Activated CD8-positive, alpha-beta T cell treated with anti-CD3 and anti-CD28 coated beads for 36 hours (primary cell): ENCODE measurements at regions of chr11 and their contacts with region 1.

Region 1: DNA sequence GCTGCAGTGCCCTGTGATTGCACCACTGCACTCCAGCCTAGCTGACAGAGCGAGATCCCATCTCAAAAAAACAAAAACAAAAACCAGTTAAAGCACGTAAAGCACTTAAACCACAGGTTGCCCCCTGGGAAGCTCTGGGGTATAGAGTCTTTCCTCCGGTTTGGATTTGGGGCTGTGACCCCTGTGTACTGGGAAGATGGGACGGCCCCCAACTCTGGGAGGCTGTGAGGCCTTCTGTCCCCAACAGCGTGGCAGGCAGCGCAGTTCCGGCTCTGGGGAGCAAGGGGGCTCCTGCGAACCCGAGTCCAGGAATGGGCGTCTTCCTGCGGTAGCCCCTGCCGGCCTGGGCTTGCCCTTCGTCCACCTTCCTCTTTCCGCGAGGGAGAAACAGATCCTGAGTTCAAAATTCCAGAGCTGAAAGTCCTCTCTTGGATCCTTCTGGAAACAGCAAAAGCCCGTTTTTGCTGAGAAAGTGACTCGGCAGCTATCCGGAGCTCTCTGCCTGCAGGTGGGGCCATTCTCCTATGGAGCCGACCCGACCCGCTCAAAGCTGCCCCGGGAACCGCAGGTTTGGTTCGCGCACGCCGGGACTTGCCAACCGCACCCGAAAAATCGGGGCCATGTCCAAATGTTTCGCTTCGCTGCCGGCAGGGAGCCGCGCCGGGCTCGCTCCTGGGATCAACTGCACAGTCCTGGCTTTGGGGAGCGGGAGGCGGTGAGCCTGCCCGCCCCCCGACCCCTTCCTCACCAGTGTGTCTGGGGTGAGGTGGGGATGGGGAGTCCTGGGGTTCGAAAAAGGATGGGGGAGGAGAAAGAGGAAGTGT is 36.3 kb upstream of the POLA2 start:
- DNase-seq: peak; percentile 76
- ATAC-seq: peak; percentile 85
- H3K4me3 Mint-ChIP-seq: peak overlapping the region; percentile 72
- H3K27ac Mint-ChIP-seq: no peak overlapping the region
- H3K4me1 Mint-ChIP-seq: peaks cover 7% of the 10 kb centered on the region
- H3K27me3 Mint-ChIP-seq: peaks cover 19% of the 10 kb centered on the region
- CTCF ChIP-seq: peak; percentile 58

Region 2: GRCh38 chr11:65261591-65262380 is 36.3 kb after region 1 on chr11 and contains the start of gene POLA2:
- CTCF ChIA-PET with region 1: interaction called, 10 read pairs
- POLR2A ChIA-PET with region 1: interaction called, 14 read pairs
- intact Hi-C with region 1: no loop called
- DNase-seq: peak; percentile 95
- ATAC-seq: peak; percentile 86
- H3K4me3 Mint-ChIP-seq: peak within 1 kb of the TSS; percentile 91
- H3K27ac Mint-ChIP-seq: peak within 1 kb of the TSS; percentile 95
- H3K4me1 Mint-ChIP-seq: peaks cover 35% of the 10 kb centered on the region
- H3K27me3 Mint-ChIP-seq: no peaks in the 10 kb centered on the region
- CTCF ChIP-seq: no peak
- total RNA-seq, gene POLA2: 55.2 to 63.8 TPM